PC-9 (cell line): ENCODE measurements at regions of chrX and their contacts with region 1.

Region 1: GRCh38 chrX:87728024-87728423 is 210.4 kb downstream of the KLHL4 start:
- DNase-seq: peak in 1 of 2 experiments; percentile 8
- H3K4me3 ChIP-seq: peak overlapping the region; percentile 41; the same call in 1 of the 2 replicates
- H3K27ac ChIP-seq: no peak overlapping the region
- H3K4me1 ChIP-seq: no peaks in the 10 kb centered on the region
- H3K27me3 ChIP-seq: no peaks in the 10 kb centered on the region
- CTCF ChIP-seq: no peak

Region 2: DNA sequence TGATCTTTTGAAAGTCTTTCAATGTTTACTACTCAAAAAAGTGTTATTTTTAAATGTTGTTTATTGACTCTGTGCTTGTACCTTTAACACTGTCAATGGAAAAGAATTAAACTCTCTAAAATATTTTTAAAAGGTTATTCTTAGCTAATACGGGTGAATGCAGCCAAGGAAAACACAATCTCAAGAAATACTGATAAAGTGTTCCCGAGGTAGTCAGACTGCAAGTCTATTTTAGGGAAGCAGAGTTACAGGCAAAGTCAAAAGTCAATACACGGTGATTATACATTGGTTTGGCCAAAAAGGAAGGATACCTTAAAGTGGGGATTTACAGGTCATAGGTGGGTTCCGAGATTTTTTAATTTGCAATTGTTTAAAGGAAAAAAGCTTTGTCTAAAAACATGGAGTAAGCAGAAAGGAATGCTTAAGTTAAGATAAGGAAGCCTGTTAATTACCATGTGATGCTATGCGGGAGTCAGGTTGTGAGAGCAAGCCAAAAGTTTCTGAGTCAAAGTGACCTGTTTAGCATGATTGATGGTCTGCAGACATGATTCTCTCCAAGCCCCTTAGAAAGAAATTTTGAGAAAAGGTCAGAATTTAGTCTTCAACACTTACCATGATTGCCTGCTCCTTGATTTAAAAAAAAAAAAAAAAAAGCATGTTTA is 77.9 kb after region 1 on chrX:
- CTCF ChIA-PET with region 1: no interaction called
- POLR2A ChIA-PET with region 1: interaction called, 18 read pairs
- intact Hi-C with region 1: loop called (anchors 10 kb)
- DNase-seq: no peak
- H3K4me3 ChIP-seq: no peak overlapping the region
- H3K27ac ChIP-seq: no peak overlapping the region
- H3K4me1 ChIP-seq: no peaks in the 10 kb centered on the region
- H3K27me3 ChIP-seq: no peaks in the 10 kb centered on the region
- CTCF ChIP-seq: no peak

Region 3: GRCh38 chrX:87813566-87813965 is 85.5 kb after region 1 on chrX:
- CTCF ChIA-PET with region 1: no interaction called
- POLR2A ChIA-PET with region 1: no interaction called
- intact Hi-C with region 1: loop called (anchors 10 kb)
- DNase-seq: peak; percentile 16 to 52
- H3K4me3 ChIP-seq: no peak overlapping the region
- H3K27ac ChIP-seq: no peak overlapping the region
- H3K4me1 ChIP-seq: no peaks in the 10 kb centered on the region; the same call in 1 of the 2 replicates
- H3K27me3 ChIP-seq: no peaks in the 10 kb centered on the region
- CTCF ChIP-seq: no peak